Colonic mucosa (tissue), 4 donors: ENCODE measurements at regions of chr4 and their contacts with region 1.

Region 1: GRCh38 chr4:48681856-48682255 is 98.2 kb downstream of the FRYL start:
- DNase-seq: no peak
- H3K4me3 ChIP-seq: no peak overlapping the region
- H3K27ac ChIP-seq: peak overlapping the region; percentile 65
- H3K4me1 ChIP-seq: no peaks in the 10 kb centered on the region
- H3K27me3 ChIP-seq: no peaks in the 10 kb centered on the region
- CTCF ChIP-seq: peak; percentile 44

Region 2: GRCh38 chr4:48565362-48566033 is 116.4 kb before region 1 on chr4:
- intact Hi-C with region 1: no loop called
- DNase-seq: no peak
- H3K4me3 ChIP-seq: no peak overlapping the region
- H3K27ac ChIP-seq: no peak overlapping the region
- H3K4me1 ChIP-seq: no peaks in the 10 kb centered on the region
- H3K27me3 ChIP-seq: no peaks in the 10 kb centered on the region
- CTCF ChIP-seq: no peak

Region 3: GRCh38 chr4:48578132-48578968 is 103.5 kb before region 1 on chr4:
- intact Hi-C with region 1: loop called (anchors 5 kb)
- DNase-seq: peak; percentile 72
- H3K4me3 ChIP-seq: no peak overlapping the region
- H3K27ac ChIP-seq: no peak overlapping the region
- H3K4me1 ChIP-seq: no peaks in the 10 kb centered on the region
- H3K27me3 ChIP-seq: no peaks in the 10 kb centered on the region
- CTCF ChIP-seq: peak; percentile 90

Region 4: DNA sequence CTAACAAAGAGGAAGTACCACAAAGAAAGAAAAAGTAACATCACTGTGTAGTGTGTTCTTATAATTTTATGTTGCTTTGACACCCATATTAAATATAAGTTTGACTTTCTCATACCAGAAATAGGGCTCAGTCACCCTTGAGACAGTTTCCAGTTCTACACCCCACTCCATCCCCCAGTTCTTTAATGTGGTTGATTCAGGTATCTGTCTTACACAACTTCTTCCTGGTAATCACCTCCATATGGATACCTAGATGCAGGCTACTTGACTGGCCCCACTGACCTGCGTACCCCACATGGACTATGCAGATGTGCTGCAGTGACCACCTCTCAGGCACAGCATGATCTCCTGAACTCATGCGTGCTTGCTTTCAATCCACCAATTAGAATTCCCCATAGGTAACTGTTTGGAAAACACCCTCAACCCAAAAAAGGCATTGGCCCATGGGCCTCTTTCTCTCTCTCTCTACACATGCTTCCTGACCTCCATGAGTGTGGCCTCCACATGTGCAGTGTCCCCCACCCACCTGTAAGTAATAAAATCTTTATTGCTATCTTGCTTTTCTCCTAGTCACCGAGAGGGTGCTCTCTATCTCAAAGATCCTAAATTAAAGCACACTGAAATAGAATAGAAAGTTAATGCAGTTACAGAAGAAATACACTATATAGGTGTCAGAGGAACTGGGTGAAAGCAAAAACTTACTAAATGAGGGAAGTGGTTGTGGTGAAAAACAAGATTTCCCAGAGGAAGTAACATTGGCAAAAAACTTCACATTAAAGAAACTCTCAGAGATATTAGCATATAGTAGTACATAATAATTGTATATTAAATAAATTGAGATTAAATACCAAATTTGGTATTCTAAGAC is 93.4 kb before region 1 on chr4:
- intact Hi-C with region 1: no loop called
- DNase-seq: no peak
- H3K4me3 ChIP-seq: no peak overlapping the region
- H3K27ac ChIP-seq: no peak overlapping the region
- H3K4me1 ChIP-seq: peaks cover 4% of the 10 kb centered on the region
- H3K27me3 ChIP-seq: no peaks in the 10 kb centered on the region
- CTCF ChIP-seq: no peak

Region 5: DNA sequence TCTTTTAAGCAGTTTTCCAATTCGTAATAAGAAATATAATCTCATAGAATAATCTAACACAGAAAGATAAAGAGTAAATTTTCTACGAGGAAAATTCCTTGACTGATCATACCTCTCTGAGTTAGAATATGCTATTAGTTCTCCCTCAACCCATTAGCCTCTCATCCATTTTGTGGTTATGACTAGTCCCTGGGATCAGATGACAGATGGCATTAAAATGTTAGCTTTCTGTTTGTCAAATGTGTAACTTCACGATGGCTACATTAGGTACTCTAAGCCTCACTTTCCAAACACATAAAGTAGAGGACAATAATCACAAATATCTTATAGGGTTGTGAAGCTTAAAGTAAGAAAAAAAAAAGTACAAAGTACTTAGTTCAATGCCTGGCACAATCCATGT is 79.6 kb before region 1 on chr4:
- intact Hi-C with region 1: loop called (anchors 5 kb)
- DNase-seq: no peak
- H3K4me3 ChIP-seq: no peak overlapping the region
- H3K27ac ChIP-seq: peak overlapping the region; percentile 73
- H3K4me1 ChIP-seq: peaks cover 8% of the 10 kb centered on the region
- H3K27me3 ChIP-seq: no peaks in the 10 kb centered on the region
- CTCF ChIP-seq: no peak